HAP-1 (cell line): ENCODE measurements at regions of chr15 and their contacts with region 1.

Region 1: DNA sequence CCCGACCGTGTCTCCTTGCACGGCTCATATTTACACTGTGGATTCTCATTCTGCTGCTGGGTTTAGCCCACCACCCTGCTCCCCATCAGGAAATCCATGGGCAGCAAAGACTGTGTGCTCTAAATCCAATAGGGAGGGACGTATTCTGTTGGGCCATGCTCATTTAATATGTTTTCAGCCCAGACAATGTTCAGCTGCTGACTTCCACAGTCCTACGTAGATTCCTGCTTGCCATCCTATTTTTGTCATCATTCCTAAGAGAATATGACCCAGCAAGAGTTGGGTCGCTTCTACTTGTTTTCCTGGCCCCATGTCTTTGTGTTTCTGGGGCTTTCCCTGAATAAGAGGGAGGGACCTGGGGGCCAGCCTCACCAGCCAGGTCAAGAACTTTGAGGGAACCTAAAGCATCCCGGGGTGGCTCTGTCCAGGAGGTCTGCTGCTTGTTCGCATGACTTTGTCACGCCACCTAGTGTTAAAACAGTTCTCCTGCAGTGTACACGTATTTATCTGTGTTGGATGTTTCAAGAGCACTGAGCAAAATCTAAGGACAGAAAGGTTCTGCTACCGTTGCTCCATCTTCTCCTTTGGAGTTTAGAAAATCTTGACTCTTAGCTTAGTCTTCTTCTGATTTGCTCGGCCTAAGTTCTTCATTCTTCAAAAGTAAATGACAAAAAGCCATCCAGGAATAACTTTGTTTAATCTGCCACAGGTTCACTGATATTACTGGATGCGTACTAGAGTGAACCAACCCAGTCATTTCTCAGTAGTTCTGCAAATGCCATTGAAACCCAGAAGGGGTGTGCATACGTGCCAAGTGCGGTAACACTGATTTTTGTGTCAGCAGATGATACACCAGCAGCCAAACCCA is 79.8 kb upstream of the NR2E3 start:
- DNase-seq: peak; percentile 81 to 88
- H3K4me3 ChIP-seq: no peak overlapping the region
- H3K4me1 ChIP-seq: no peaks in the 10 kb centered on the region
- H3K27me3 ChIP-seq: no peaks in the 10 kb centered on the region

Region 2: DNA sequence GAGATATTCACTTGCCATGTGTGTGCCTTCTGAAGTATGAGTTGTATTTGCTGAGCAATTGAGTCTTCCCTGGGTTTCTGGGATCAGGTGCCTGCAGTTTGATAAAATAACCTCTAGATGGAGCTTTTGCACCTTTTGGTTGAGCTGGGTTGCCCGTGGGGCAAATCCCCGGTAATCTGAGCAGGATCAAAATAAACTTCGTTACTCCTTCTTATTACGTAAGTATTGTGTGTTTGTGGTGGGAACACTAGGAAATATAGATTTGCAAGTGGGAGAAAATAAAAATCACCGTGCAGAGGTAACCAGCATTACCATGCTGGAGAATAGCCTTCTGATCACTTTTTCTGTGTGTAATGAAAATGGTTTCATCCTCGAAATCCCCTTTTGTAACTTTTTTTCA is 197.5 kb before region 1 on chr15:
- in situ Hi-C with region 1: loop called (anchors 5 kb)
- DNase-seq: peak; percentile 70 to 90
- H3K4me3 ChIP-seq: no peak overlapping the region
- H3K4me1 ChIP-seq: peaks cover 5% of the 10 kb centered on the region
- H3K27me3 ChIP-seq: no peaks in the 10 kb centered on the region

Region 3: GRCh38 chr15:71792521-71792920 is 62.0 kb after region 1 on chr15:
- in situ Hi-C with region 1: no loop called
- DNase-seq: no peak
- H3K4me3 ChIP-seq: no peak overlapping the region
- H3K4me1 ChIP-seq: no peaks in the 10 kb centered on the region
- H3K27me3 ChIP-seq: no peaks in the 10 kb centered on the region